ENCODE measurements at regions of chr11 and their contacts with region 1.

Region 1: GRCh38 chr11:85595285-85595884 is 31.8 kb downstream of the DLG2 start:
- DNase-seq: peak in 7 of 9 donors; percentile 19 to 65 (median 49)
- ATAC-seq: peak; percentile 73
- H3K4me3 ChIP-seq: no peak overlapping the region
- H3K4me3 Mint-ChIP-seq: no peak overlapping the region
- H3K27ac ChIP-seq: no peak overlapping the region
- H3K27ac Mint-ChIP-seq: no peak overlapping the region
- H3K4me1 ChIP-seq: no peaks in the 10 kb centered on the region
- H3K4me1 Mint-ChIP-seq: no peaks in the 10 kb centered on the region
- H3K27me3 ChIP-seq: no peaks in the 10 kb centered on the region
- H3K27me3 Mint-ChIP-seq: peaks cover 0 to 19% (median 0%) of the 10 kb centered on the region in 5 donors

Region 2: GRCh38 chr11:83663446-83663845 is 1931.9 kb before region 1 on chr11:
- CTCF ChIA-PET with region 1: no interaction called
- POLR2A ChIA-PET with region 1: no interaction called
- intact Hi-C with region 1: no loop called
- DNase-seq: no peak
- ATAC-seq: no peak
- H3K4me3 ChIP-seq: no peak overlapping the region
- H3K4me3 Mint-ChIP-seq: no peak overlapping the region
- H3K27ac ChIP-seq: no peak overlapping the region
- H3K27ac Mint-ChIP-seq: no peak overlapping the region
- H3K4me1 ChIP-seq: no peaks in the 10 kb centered on the region
- H3K4me1 Mint-ChIP-seq: no peaks in the 10 kb centered on the region
- H3K27me3 ChIP-seq: no peaks in the 10 kb centered on the region
- H3K27me3 Mint-ChIP-seq: peaks cover 0 to 9% (median 0%) of the 10 kb centered on the region in 5 donors

Region 3: DNA sequence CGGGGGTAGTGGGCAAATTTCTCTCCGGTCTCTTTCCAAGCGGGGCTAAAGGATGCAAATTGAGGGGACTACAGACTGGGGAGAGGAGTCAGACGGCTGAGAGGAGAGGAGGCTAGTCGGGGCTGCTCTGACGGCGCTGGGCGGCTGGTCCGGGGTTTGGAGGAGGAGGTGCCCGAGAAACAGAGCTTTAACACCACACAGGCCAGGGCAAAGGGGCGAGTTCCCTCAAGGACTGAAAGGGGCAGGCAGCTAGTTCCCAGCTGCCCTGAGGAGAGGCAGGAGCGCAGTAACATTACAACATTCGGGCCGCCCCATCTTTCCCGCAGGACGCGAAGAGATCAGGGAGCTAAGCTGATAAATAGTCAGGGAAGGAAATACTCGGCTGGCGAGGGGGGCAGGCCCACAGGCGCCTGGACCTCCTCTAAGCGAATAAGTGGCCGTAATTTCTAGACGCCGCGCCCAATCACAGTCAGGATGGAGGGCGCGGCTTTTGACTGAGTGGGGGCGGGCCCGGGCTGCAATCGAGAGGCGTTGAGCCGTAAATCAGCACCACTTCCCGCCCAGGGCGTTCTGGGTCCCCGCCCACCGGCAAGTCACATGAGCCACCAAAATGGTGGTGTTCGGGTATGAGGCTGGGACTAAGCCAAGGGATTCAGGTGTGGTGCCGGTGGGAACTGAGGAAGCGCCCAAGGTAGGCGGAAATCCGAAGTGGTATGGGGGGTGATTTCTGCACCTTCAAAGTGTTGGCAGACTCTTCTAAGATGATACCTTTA is 32.8 kb after region 1 on chr11 and contains the start of gene TMEM126B:
- CTCF ChIA-PET with region 1: no interaction called
- POLR2A ChIA-PET with region 1: no interaction called
- intact Hi-C with region 1: loop called (anchors 1 kb)
- DNase-seq: peak; percentile 85 to 95 (median 94)
- ATAC-seq: peak; percentile 99
- H3K4me3 ChIP-seq: peak within 1 kb of the TSS; percentile 98
- H3K4me3 Mint-ChIP-seq: peak within 1 kb of the TSS; percentile 84 to 98 (median 94)
- H3K27ac ChIP-seq: peak within 1 kb of the TSS; percentile 85
- H3K27ac Mint-ChIP-seq: peak within 1 kb of the TSS; percentile 89 to 97 (median 94)
- H3K4me1 ChIP-seq: peaks cover 13 to 22% of the 10 kb centered on the region in 2 donors
- H3K4me1 Mint-ChIP-seq: peaks cover 17 to 67% (median 48%) of the 10 kb centered on the region in 7 donors
- H3K27me3 ChIP-seq: no peaks in the 10 kb centered on the region
- H3K27me3 Mint-ChIP-seq: peaks cover 0 to 9% (median 0%) of the 10 kb centered on the region in 5 donors
- total RNA-seq, gene TMEM126B: 22.1 to 50.4 (median 36.4) TPM

Region 4: GRCh38 chr11:85694386-85694980 is 99.1 kb after region 1 on chr11:
- CTCF ChIA-PET with region 1: interaction called, 3 read pairs
- POLR2A ChIA-PET with region 1: no interaction called
- intact Hi-C with region 1: loop called in 1 of 2 experiments (anchors 2 kb)
- DNase-seq: peak in 7 of 9 donors; percentile 36 to 63 (median 55)
- ATAC-seq: peak; percentile 70
- H3K4me3 ChIP-seq: no peak overlapping the region
- H3K4me3 Mint-ChIP-seq: no peak overlapping the region
- H3K27ac ChIP-seq: no peak overlapping the region
- H3K27ac Mint-ChIP-seq: peak overlapping the region in 1 of 9 donors; percentile 12
- H3K4me1 ChIP-seq: peaks cover 2 to 7% of the 10 kb centered on the region in 2 donors
- H3K4me1 Mint-ChIP-seq: peaks cover 2 to 52% (median 8%) of the 10 kb centered on the region in 7 donors
- H3K27me3 ChIP-seq: no peaks in the 10 kb centered on the region
- H3K27me3 Mint-ChIP-seq: peaks cover 0 to 3% (median 0%) of the 10 kb centered on the region in 5 donors

Region 5: GRCh38 chr11:85977751-85978160 is 382.4 kb after region 1 on chr11:
- CTCF ChIA-PET with region 1: no interaction called
- POLR2A ChIA-PET with region 1: no interaction called
- intact Hi-C with region 1: loop called in 1 of 2 experiments (anchors 5 kb)
- DNase-seq: no peak
- ATAC-seq: no peak
- H3K4me3 ChIP-seq: no peak overlapping the region
- H3K4me3 Mint-ChIP-seq: no peak overlapping the region
- H3K27ac ChIP-seq: no peak overlapping the region
- H3K27ac Mint-ChIP-seq: peak overlapping the region in 1 of 9 donors; percentile 10
- H3K4me1 ChIP-seq: no peaks in the 10 kb centered on the region
- H3K4me1 Mint-ChIP-seq: peaks cover 0 to 13% (median 5%) of the 10 kb centered on the region in 7 donors
- H3K27me3 ChIP-seq: no peaks in the 10 kb centered on the region
- H3K27me3 Mint-ChIP-seq: no peaks in the 10 kb centered on the region

Region 6: GRCh38 chr11:85988780-85989179 is 393.4 kb after region 1 on chr11:
- CTCF ChIA-PET with region 1: no interaction called
- POLR2A ChIA-PET with region 1: no interaction called
- intact Hi-C with region 1: no loop called
- DNase-seq: no peak
- ATAC-seq: no peak
- H3K4me3 ChIP-seq: no peak overlapping the region
- H3K4me3 Mint-ChIP-seq: no peak overlapping the region
- H3K27ac ChIP-seq: no peak overlapping the region
- H3K27ac Mint-ChIP-seq: peak overlapping the region in 5 of 9 donors; percentile 41 to 89 (median 52)
- H3K4me1 ChIP-seq: no peaks in the 10 kb centered on the region
- H3K4me1 Mint-ChIP-seq: peaks cover 5 to 23% (median 15%) of the 10 kb centered on the region in 7 donors
- H3K27me3 ChIP-seq: no peaks in the 10 kb centered on the region
- H3K27me3 Mint-ChIP-seq: no peaks in the 10 kb centered on the region

Region 7: GRCh38 chr11:86193297-86194095 is 598.1 kb after region 1 on chr11:
- CTCF ChIA-PET with region 1: no interaction called
- POLR2A ChIA-PET with region 1: no interaction called
- intact Hi-C with region 1: loop called (anchors 1 to 2 kb)
- DNase-seq: peak; percentile 9 to 70 (median 65)
- ATAC-seq: peak; percentile 99
- H3K4me3 ChIP-seq: peak overlapping the region; percentile 36
- H3K4me3 Mint-ChIP-seq: peak overlapping the region; percentile 71 to 94 (median 88)
- H3K27ac ChIP-seq: no peak overlapping the region
- H3K27ac Mint-ChIP-seq: peak overlapping the region; percentile 21 to 91 (median 67)
- H3K4me1 ChIP-seq: peaks cover 5 to 7% of the 10 kb centered on the region in 2 donors
- H3K4me1 Mint-ChIP-seq: peaks cover 13 to 24% (median 15%) of the 10 kb centered on the region in 7 donors
- H3K27me3 ChIP-seq: no peaks in the 10 kb centered on the region
- H3K27me3 Mint-ChIP-seq: peaks cover 0 to 10% (median 3%) of the 10 kb centered on the region in 5 donors

Region 8: DNA sequence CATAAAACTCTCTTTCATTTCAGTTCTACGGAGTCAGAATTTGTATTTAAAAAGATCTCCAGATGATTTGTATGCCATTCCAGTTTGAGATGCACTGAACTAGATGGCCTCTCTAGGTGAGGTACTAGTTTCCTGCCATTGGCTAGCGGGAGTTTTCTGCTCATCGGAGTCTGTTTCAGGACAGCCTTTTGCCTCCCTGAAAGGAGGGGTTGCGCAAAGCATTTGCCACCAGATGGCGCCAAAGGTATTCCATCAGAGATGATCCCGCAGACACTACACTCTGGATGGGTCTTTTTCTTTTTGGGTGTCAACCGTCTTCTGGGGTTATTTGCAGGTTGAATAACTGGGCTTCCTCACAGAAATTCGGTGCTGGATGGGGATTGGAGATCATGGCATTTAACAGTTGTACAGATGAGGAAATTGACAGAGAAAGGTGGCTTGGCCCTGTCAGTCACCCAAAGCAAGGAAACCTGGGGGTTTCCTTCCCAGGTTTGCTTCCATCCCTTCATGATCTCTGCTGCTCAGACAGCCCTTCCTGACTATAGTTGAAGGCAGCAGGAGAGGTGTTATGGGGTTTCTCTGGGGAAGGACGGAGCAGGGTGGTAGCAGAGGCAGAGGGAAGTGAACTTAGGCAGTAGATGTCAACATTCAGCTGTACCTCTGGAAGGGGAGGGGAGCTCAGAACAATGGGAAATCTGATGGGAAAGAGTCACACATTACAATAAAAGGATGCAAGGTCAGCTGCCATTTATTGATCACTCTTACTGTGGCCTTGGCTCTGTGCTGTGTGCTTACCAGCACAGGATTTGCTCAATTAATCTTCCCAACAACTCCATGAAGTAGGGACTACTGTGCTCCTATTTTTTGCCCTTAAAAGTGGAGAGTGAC is 860.9 kb after region 1 on chr11:
- CTCF ChIA-PET with region 1: no interaction called
- POLR2A ChIA-PET with region 1: no interaction called
- intact Hi-C with region 1: loop called in 1 of 2 experiments (anchors 1 kb)
- DNase-seq: peak; percentile 12 to 76 (median 44)
- ATAC-seq: peak; percentile 74
- H3K4me3 ChIP-seq: no peak overlapping the region
- H3K4me3 Mint-ChIP-seq: no peak overlapping the region
- H3K27ac ChIP-seq: no peak overlapping the region
- H3K27ac Mint-ChIP-seq: no peak overlapping the region
- H3K4me1 ChIP-seq: no peaks in the 10 kb centered on the region
- H3K4me1 Mint-ChIP-seq: peaks cover 0 to 31% (median 4%) of the 10 kb centered on the region in 7 donors
- H3K27me3 ChIP-seq: no peaks in the 10 kb centered on the region
- H3K27me3 Mint-ChIP-seq: no peaks in the 10 kb centered on the region

Measured in naive thymus-derived CD4-positive, alpha-beta T cell (primary cell).